Activated CD4-positive, alpha-beta T cell treated with anti-CD3 and anti-CD28 coated beads for 36 hours (primary cell): ENCODE measurements at regions of chr16 and their contacts with region 1.

Region 1: GRCh38 chr16:17784073-17784472 is 313.3 kb upstream of the XYLT1 start:
- DNase-seq: peak; percentile 10
- ATAC-seq: no peak
- H3K4me3 Mint-ChIP-seq: no peak overlapping the region
- H3K27ac Mint-ChIP-seq: no peak overlapping the region
- H3K4me1 Mint-ChIP-seq: no peaks in the 10 kb centered on the region
- H3K27me3 Mint-ChIP-seq: peaks cover 6% of the 10 kb centered on the region

Region 2: DNA sequence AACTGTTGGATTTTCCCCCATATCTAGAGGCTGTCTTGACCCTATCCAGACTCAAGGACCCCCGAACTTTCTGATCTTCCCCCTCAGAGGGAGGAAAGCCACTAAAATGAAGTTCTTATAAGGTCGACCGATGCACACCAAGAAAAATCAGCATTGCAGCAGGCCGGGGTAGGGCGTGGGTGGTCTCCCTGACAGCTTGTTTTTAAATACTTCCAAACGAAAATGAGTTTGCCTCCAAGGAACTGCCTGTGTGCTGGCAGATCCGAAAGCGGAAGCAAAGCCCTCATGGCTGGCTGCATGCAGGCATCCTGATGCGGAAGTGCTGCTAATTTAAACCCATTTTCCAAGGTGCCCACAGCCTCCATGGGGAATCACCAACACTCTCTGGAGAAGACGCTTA is 61.0 kb after region 1 on chr16:
- CTCF ChIA-PET with region 1: no interaction called
- POLR2A ChIA-PET with region 1: no interaction called
- intact Hi-C with region 1: loop called in 1 of 2 experiments (anchors 10 kb)
- DNase-seq: no peak
- ATAC-seq: no peak
- H3K4me3 Mint-ChIP-seq: no peak overlapping the region
- H3K27ac Mint-ChIP-seq: no peak overlapping the region
- H3K4me1 Mint-ChIP-seq: no peaks in the 10 kb centered on the region
- H3K27me3 Mint-ChIP-seq: peaks cover 11% of the 10 kb centered on the region